ENCODE measurements at regions of chr10 and their contacts with region 1.

Region 1: DNA sequence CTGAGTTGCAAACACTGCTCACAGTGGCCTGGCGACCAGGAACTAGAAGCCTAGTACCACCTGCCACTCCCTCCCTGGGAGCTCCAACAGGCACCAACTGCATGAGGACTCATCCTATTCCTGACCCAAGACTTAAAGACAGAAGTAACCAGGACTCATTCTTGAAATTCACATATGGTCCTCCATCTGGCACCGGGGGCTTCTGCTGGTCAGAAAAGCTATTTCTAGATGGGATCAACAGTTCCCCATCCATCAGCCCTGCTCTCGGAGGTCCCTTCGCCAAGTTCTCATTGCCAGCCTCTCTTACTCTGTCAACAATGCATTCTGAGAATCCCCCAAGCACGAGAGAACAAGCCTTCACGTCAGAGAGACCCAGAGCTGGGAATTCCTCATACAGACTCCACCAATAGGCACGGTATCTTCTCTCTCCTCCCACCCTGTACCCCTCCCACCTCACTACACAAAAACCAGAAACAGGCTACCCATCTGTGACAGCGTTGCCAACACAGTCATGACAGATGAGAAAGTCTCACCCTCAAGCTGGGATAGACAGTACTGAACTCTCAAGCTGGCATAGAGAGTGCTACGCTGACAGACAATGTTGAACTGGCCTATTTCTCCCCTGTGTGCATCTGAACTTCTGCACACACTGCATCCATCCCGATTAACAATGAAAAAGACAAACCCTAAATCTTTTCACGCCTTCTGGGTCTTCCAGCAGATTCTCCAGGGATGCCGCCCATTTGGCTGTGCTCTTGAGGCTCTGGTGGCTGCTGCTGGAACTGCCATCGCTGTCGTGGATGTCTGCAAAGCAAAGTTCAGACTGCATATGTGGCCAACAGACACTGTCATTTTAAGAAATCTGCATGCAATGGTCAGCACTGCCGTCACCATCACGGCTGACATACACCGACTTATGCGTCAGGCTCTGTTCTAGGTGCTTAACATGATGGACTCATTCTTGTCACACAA is 15.6 kb downstream of the RGS10 start:
- DNase-seq: no peak
- H3K4me3 ChIP-seq: no peak overlapping the region
- H3K27ac ChIP-seq: no peak overlapping the region
- H3K4me1 ChIP-seq: peaks cover 0 to under 1% (median 0%) of the 10 kb centered on the region in 4 experiments
- H3K27me3 ChIP-seq: no peaks in the 10 kb centered on the region

Region 2: DNA sequence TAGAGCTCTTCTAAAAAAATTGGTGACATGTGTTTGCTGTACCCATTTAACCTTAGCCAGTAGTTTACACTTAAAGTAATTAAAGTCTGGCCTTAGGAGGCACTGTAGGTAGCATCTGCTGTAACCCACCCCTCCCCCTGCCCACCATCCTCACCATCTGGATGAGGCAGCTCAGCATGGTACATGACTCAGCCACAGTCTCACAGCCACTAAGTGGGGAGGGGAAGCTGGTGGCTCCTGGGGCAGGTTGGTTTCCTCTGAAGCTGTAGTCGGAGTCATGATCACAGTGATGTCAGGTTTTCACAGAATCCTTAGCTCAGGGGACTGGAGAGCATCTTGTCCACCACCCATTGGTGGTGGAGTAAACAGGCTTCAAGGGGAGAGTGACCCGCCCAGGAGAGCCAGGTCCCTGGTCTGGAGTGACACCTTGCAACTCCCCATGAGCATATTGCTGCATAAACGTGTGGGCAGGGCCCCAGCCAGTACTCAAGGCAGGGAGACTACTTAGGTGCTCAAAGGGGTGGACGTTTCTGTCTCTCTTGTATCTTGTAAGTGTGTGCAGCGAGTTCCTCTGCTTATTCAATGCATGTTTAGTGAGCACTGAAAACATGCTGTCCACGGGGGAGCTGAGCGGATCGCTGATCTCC is 193.6 kb before region 1 on chr10:
- CTCF ChIA-PET with region 1: no interaction called
- POLR2A ChIA-PET with region 1: no interaction called
- DNase-seq: peak in 2 of 3 donors; percentile 48 to 57
- H3K4me3 ChIP-seq: no peak overlapping the region
- H3K27ac ChIP-seq: no peak overlapping the region
- H3K4me1 ChIP-seq: no peaks in the 10 kb centered on the region
- H3K27me3 ChIP-seq: peaks cover 0 to 8% (median 4%) of the 10 kb centered on the region in 5 experiments

Region 3: GRCh38 chr10:119378737-119379067 is 148.2 kb before region 1 on chr10:
- CTCF ChIA-PET with region 1: no interaction called
- POLR2A ChIA-PET with region 1: no interaction called
- DNase-seq: no peak
- H3K4me3 ChIP-seq: no peak overlapping the region
- H3K27ac ChIP-seq: no peak overlapping the region
- H3K4me1 ChIP-seq: peaks cover 0 to 5% (median 0%) of the 10 kb centered on the region in 4 experiments
- H3K27me3 ChIP-seq: peaks cover 0 to 2% (median 0%) of the 10 kb centered on the region in 5 experiments

Region 4: DNA sequence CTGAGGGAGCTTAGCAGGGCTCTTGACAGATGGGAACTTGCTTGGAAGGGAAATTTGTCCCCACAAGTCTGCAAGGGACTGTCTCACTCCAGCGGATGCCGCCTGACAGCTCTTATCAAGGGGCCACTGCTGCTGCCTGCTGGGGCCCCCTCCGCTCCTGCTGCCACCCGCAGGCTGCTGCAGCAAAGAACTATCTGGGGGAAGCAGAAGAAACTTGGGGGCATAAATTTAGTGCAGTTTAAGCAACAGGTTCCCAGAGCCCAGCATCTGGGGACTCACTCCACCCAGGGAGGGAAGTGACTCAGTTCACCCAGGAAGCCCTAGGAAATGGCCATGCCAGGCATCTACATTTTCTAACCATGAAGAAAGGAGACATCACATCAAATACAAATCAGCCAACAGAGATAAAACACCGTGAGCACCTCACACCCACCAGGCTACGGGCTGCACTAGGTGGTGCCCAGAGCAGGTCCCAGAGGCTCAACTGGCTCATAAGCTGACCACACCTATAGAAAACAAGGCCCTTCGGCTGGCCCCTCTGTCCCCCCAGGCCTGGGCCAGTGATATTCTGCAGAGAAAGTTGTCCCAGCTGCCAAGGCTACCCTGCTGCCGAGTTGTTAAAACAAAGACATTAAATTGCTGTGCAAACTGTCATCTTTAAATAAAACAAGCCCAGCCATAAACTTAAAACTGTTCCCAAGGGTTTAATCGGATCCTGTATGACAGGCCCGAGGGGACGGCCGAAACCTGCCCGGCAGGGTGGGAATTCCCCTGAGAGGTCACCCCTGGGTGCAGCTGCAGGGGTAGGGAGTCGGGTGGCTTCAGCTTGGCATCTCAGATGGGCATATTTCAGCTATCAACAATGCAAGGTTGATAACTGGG is 12.0 kb after region 1 on chr10:
- CTCF ChIA-PET with region 1: interaction called, 22 read pairs
- POLR2A ChIA-PET with region 1: no interaction called
- DNase-seq: peak; percentile 34 to 90 (median 77)
- H3K4me3 ChIP-seq: peak overlapping the region in 3 of 7 experiments; percentile 4 to 51 (median 39)
- H3K27ac ChIP-seq: no peak overlapping the region
- H3K4me1 ChIP-seq: peaks cover 13 to 77% (median 57%) of the 10 kb centered on the region in 4 experiments
- H3K27me3 ChIP-seq: no peaks in the 10 kb centered on the region

Region 5: DNA sequence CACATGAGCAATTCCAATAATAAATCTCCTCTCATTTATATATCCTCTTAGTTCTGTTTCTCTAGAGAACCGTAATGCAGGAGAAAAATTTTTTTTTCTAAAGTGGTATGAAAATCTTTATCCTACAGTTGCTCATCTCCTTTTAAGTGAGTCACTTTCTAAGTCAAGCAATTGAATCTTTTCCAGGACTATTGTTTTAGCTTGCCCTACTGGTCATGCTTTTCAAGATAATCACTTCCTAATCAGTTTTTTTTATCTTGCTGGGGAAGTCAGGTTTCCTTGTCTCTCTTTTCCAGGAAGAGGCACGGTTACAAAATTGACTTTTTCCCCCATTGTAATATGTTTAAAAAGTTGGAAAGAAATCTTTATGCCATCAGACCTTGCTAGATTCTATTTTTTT is 243.0 kb after region 1 on chr10:
- CTCF ChIA-PET with region 1: no interaction called
- POLR2A ChIA-PET with region 1: no interaction called
- DNase-seq: no peak
- H3K4me3 ChIP-seq: no peak overlapping the region
- H3K27ac ChIP-seq: no peak overlapping the region
- H3K4me1 ChIP-seq: peaks cover 7 to 31% (median 19%) of the 10 kb centered on the region in 4 experiments
- H3K27me3 ChIP-seq: no peaks in the 10 kb centered on the region